ENCODE measurements at regions of chr9 and their contacts with region 1.

Region 1: GRCh38 chr9:125189361-125190289 is at the start of gene PPP6C:
- DNase-seq: peak; percentile 95 to 98 (median 96)
- ATAC-seq: peak; percentile 97
- H3K4me3 ChIP-seq: peak within 1 kb of the TSS; percentile 96
- H3K27ac ChIP-seq: peak within 1 kb of the TSS; percentile 91
- H3K4me1 ChIP-seq: peaks cover 5 to 20% of the 10 kb centered on the region in 2 experiments; a peak in 4 of 5 replicates
- H3K27me3 ChIP-seq: no peaks in the 10 kb centered on the region
- CTCF ChIP-seq: peak; percentile 78 to 91 (median 79)
- EP300 ChIP-seq: peak; percentile 47; the same call in 1 of the 2 replicates
- POLR2A ChIP-seq: peak; percentile 84
- RAD21 ChIP-seq: peak in 1 of 2 experiments; percentile 16; a peak in 1 of 4 replicates
- polyA plus RNA-seq, gene PPP6C: 35.0 to 38.3 TPM

Region 2: DNA sequence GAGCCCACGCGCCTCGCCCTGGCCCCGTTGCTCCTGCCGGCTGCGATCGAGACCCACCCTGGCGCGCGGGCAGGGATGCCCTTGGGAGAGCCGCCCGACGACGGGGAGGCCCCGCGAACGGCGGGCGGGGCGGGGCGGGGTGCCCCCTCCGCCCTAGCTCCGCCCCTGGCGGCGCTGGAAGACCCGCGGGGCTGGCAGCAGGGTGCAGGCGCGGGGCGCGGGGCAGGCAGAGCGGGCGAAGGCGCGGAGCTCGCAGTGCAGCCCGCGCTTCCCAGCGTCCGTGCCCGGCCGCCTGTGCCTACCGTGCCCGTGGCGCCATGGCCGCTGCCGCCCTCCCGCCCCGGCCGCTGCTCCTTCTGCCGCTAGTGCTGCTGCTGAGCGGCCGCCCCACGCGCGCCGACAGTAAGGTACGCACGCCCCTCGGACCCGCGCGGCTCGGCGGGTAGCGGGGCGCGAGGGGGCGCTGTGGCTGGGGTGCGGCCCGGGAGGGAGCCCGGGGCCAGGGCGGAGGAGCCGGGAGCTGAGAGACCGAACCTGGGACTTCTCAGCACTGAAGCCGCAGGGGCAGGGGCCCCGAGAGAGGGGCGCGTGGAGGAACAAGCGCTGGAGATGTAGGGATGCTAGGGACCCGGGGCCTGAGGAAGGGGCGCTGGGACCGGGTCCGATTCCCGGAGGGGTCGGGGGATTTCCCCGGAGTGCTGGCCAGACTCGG is 412.5 kb before region 1 on chr9 and contains the start of gene OLFML2A:
- CTCF ChIA-PET with region 1: no interaction called
- POLR2A ChIA-PET with region 1: no interaction called
- in situ Hi-C with region 1: no loop called
- intact Hi-C with region 1: no loop called
- DNase-seq: peak in 2 of 4 experiments; percentile 37 to 40
- ATAC-seq: peak; percentile 25; the same call in 1 of the 3 replicates
- H3K4me3 ChIP-seq: peak within 1 kb of the TSS; percentile 11; the same call in 1 of the 2 replicates
- H3K27ac ChIP-seq: no peak within 1 kb of the TSS
- H3K4me1 ChIP-seq: peaks cover 0 to 21% of the 10 kb centered on the region in 2 experiments; a peak in 3 of 5 replicates
- H3K27me3 ChIP-seq: 0 out of 5 replicates have a peak, but pooled peaks cover 0 to 4% of the 10 kb centered on the region in 2 experiments
- CTCF ChIP-seq: peak in 2 of 3 experiments; percentile 12 to 35; a peak in 2 of 6 replicates
- EP300 ChIP-seq: no peak
- POLR2A ChIP-seq: no peak
- RAD21 ChIP-seq: no peak
- polyA plus RNA-seq, gene OLFML2A: not detected

Region 3: DNA sequence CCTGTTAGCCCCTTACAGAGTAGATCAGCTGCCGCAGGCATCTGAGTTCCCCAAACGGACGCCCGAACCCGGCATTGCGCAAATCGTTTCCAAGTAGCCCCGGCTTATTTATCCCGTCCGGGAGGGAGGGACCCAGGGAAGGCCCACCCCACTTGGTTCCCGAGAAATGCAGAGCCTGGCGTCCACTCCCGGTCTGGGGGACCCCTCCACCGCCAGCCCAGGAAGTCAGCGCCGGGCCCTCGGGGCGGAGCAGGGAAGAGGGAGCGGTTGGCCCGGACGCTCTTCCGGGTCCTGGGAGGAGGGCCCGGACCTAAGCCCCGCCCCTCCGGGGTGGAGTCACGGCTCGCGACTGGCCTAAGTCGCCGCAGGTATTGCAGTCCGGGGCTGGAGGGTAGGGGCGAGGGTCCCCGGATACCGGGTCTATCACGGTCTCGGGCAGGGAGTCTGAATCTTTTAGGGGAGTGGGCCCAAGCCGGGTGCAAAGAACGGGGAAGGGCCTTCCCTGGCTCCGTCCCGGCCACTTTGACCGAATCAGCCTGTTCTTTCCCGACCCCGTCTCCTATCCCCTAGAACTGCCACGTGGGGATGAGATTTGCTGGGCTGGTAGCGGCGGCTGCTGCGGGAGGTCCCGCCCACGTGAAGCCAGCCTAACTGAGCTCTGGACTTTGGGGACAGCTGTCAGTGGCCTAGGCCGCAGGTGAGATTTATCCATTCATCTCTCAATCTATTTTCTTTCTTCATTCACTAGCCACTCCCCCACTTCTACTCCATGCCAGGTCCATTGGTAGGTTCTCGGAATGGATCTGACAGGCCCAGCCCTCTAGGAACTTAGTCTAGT is 10.8 kb after region 1 on chr9 and contains the start of gene RABEPK:
- CTCF ChIA-PET with region 1: no interaction called
- POLR2A ChIA-PET with region 1: interaction called, 15 read pairs
- in situ Hi-C with region 1: no loop called
- intact Hi-C with region 1: no loop called
- DNase-seq: peak; percentile 96 to 98 (median 97)
- ATAC-seq: peak; percentile 99
- H3K4me3 ChIP-seq: peak within 1 kb of the TSS; percentile 80
- H3K27ac ChIP-seq: peak within 1 kb of the TSS; percentile 88
- H3K4me1 ChIP-seq: peaks cover 3 to 13% of the 10 kb centered on the region in 2 experiments; a peak in 2 of 5 replicates
- H3K27me3 ChIP-seq: no peaks in the 10 kb centered on the region
- CTCF ChIP-seq: no peak
- EP300 ChIP-seq: no peak
- POLR2A ChIP-seq: peak; percentile 95
- RAD21 ChIP-seq: no peak
- polyA plus RNA-seq, gene RABEPK: 81.5 to 113 TPM

Region 4: DNA sequence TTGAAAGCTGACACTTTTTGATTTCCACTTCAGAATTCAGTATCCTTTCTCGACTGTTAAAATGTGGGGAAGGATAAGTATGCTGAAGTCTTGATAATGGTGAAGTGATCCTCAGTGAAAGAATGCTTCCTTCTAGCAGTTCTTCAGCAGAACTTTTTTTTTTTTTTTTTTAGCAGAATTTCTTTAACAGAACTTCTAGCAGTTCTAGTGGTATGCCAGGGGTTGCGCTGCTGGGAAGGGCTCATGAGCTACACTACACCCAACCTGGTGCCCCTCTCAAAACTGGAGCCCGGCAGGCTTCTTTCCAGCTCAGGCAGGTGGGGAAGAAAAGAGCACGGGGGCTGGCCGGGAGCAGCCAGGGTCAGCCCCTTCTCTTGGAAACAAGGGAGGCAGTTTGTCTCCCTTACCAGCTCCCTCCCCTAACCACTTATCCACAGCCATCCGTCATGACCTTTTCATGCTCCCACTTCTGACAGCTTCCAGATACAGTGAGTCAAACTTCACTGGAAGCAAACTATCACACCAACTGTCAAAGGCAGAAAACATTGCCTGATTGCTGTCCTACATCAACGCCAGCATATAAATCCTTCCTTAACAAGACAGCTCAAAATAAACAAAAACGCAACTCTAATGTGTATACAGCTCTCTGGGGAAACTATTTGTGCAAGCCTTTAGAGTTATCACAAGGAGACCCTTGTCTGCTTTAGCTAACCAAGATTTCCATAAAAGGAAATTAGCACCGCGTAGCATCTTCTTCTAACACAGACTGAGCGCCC is 283.5 kb after region 1 on chr9:
- CTCF ChIA-PET with region 1: no interaction called
- POLR2A ChIA-PET with region 1: no interaction called
- in situ Hi-C with region 1: no loop called
- intact Hi-C with region 1: no loop called
- DNase-seq: peak; percentile 62 to 91 (median 76)
- ATAC-seq: peak; percentile 83
- H3K4me3 ChIP-seq: peak overlapping the region; percentile 15; the same call in 1 of the 2 replicates
- H3K27ac ChIP-seq: peak overlapping the region; percentile 80
- H3K4me1 ChIP-seq: peaks cover 32 to 67% of the 10 kb centered on the region in 2 experiments
- H3K27me3 ChIP-seq: no peaks in the 10 kb centered on the region
- CTCF ChIP-seq: 0 out of 6 replicates have a peak, but pooled peaks have one; percentile 3 to 22 (median 6)
- EP300 ChIP-seq: peak; percentile 94
- POLR2A ChIP-seq: no peak
- RAD21 ChIP-seq: peak in 1 of 2 experiments; percentile 19; a peak in 2 of 4 replicates

Measured in K562 (cell line).